ENCODE measurements at regions of chr10 and their contacts with region 1.

Region 1: DNA sequence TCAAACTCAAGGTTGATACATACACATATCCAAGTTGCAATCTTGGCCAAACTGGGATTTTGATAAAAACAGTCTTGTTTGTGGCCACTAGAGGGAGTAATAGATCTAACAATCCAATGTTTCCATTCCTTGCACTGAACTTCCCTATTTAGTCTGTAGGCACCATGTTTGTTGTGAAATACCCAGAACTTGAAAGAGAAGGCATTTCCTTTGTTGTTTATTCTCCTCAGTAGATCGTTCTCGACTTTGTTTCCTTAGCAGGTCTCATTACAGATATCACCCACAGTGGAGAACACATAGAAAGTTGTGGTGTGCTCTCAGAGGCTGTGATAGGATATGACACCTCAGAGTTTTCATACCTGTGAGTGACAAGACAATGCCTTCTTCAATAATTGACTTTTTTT is 70.3 kb upstream of the MXI1 start:
- DNase-seq: no peak
- ATAC-seq: peak; percentile 76

Region 2: GRCh38 chr10:109770663-109771062 is 366.5 kb before region 1 on chr10:
- intact Hi-C with region 1: no loop called
- DNase-seq: no peak
- ATAC-seq: no peak

Region 3: DNA sequence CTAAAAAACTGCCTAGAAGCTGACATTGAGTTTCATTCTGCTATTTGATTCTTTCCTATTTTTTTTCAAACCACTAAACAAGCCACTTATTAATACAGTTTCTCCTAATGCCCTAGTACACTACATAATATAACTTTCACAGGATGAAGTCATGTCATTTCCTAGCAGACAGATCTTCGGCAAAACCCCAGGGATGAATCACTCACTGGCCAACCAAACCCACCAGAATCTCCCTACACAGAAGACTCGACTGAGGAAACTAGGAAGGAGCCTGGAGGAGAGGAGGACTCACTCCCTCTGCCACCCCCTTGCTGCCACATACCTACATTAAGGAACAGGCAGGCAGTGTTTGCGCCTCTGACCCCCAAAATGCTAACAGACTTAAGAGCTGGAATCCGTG is 247.3 kb before region 1 on chr10:
- intact Hi-C with region 1: loop called (anchors 5 kb)
- DNase-seq: no peak
- ATAC-seq: no peak

Region 4: GRCh38 chr10:110210674-110211464 is 73.7 kb after region 1 on chr10:
- intact Hi-C with region 1: loop called (anchors 2 kb)
- DNase-seq: peak; percentile 97
- ATAC-seq: peak; percentile 88

Region 5: GRCh38 chr10:110225756-110226542 is 88.8 kb after region 1 on chr10:
- intact Hi-C with region 1: loop called (anchors 1 kb)
- DNase-seq: peak; percentile 96
- ATAC-seq: peak; percentile 73

Region 6: DNA sequence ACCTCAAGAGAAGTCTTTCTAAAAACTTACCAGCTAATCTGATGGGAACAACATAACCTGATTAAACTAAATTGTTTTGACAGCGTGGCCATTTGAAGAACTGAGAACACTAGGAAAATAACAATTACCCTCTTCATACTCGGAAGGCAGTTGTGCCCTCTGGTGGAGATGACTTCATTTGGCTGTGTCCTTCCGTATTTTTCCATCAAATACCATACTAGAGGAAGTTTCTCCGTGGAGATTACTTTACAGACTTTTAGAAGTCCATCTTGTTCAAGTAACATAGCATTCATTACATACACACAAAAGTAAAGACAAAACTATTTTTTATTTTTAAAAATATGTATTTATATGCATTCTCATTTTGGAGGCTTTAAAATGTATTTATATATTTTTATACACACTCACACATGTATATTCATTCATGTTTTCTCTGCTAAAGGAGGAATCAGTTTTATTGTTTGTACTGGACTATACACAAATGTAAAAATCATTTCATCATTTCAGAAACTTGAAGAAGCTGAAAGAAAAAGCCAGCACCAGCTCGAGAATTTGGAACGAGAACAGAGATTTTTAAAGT is 142.4 kb after region 1 on chr10:
- intact Hi-C with region 1: loop called (anchors 1 kb)
- DNase-seq: no peak
- ATAC-seq: peak; percentile 76

Region 7: GRCh38 chr10:110535958-110536891 is 399.1 kb after region 1 on chr10:
- intact Hi-C with region 1: loop called (anchors 10 kb)
- DNase-seq: no peak
- ATAC-seq: peak; percentile 70